A549 (cell line): ENCODE measurements at regions of chr17 and their contacts with region 1.

Region 1: DNA sequence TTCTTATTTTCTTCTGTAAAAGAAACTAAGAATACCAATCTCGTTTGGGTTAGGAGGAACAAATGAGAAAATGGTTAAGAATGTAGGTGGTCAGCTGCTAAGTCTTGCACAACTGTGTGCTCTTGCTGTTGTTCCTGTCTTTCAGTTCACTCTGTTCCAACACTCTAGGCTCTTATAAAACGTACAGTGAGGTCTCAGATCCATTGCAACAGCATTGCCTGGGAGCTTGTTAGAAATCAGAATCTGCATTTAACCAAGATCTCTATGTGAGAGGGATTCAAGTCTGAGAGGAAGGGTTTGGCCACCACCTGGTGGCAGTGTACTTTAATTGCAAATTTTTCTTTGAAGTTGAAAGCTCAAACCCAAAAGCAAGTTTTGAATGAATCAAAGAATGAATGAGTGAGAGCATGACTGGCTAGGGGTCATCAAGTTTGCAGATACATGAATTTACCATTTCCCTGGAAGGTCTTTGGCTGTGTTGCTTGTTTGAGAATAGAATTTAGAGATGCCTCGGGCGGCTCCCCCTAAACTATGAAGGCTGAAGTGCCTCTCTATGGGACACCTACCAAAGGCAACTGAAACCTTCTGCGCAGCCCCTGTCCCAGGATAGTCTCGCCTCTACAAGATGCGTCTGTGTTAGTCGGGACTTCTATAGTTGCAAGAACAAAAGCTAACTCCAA is 2.5 kb downstream of the ALOX15B start:
- DNase-seq: peak; percentile 81
- ATAC-seq: peak; percentile 67 to 76; a peak in 5 of 6 replicates
- H3K4me3 ChIP-seq: no peak overlapping the region
- H3K27ac ChIP-seq: peak overlapping the region in 1 of 2 experiments; percentile 3; a peak in 1 of 6 replicates
- H3K4me1 ChIP-seq: no peaks in the 10 kb centered on the region
- CTCF ChIP-seq: peak; percentile 96
- EP300 ChIP-seq: no peak
- POLR2A ChIP-seq: no peak
- RAD21 ChIP-seq: peak; percentile 94 to 96

Region 2: GRCh38 chr17:7825206-7825990 is 216.0 kb before region 1 on chr17:
- CTCF ChIA-PET with region 1: interaction called, 49 read pairs
- POLR2A ChIA-PET with region 1: no interaction called
- DNase-seq: peak; percentile 47 to 67
- ATAC-seq: peak; percentile 70 to 78
- H3K4me3 ChIP-seq: no peak overlapping the region
- H3K27ac ChIP-seq: no peak overlapping the region
- H3K4me1 ChIP-seq: no peaks in the 10 kb centered on the region; the same call in 2 of the 3 replicates
- CTCF ChIP-seq: no peak
- EP300 ChIP-seq: no peak
- POLR2A ChIP-seq: no peak
- RAD21 ChIP-seq: no peak

Region 3: GRCh38 chr17:7867881-7868329 is 173.5 kb before region 1 on chr17:
- CTCF ChIA-PET with region 1: interaction called, 117 read pairs
- POLR2A ChIA-PET with region 1: no interaction called
- DNase-seq: no peak
- ATAC-seq: no peak
- H3K4me3 ChIP-seq: no peak overlapping the region
- H3K27ac ChIP-seq: no peak overlapping the region
- H3K4me1 ChIP-seq: peaks cover 5% of the 10 kb centered on the region; the same call in 1 of the 3 replicates
- CTCF ChIP-seq: no peak
- EP300 ChIP-seq: no peak
- POLR2A ChIP-seq: no peak
- RAD21 ChIP-seq: no peak

Region 4: GRCh38 chr17:7931709-7932482 is 109.5 kb before region 1 on chr17 and contains the starts of genes CNTROB and TRAPPC1:
- CTCF ChIA-PET with region 1: interaction called, 26 read pairs
- POLR2A ChIA-PET with region 1: interaction called, 4 read pairs
- DNase-seq: peak; percentile 99 to 100
- ATAC-seq: peak; percentile 86 to 94
- H3K4me3 ChIP-seq: peak within 1 kb of the TSS; percentile 69
- H3K27ac ChIP-seq: peak within 1 kb of the TSS; percentile 86 to 89
- H3K4me1 ChIP-seq: peaks cover 21% of the 10 kb centered on the region
- CTCF ChIP-seq: no peak
- EP300 ChIP-seq: no peak
- POLR2A ChIP-seq: peak; percentile 72
- RAD21 ChIP-seq: no peak
- polyA plus RNA-seq, gene CNTROB: 23.2 and 28.3 TPM in 2 replicates
- polyA plus RNA-seq, gene TRAPPC1: 200 and 204 TPM in 2 replicates

Region 5: DNA sequence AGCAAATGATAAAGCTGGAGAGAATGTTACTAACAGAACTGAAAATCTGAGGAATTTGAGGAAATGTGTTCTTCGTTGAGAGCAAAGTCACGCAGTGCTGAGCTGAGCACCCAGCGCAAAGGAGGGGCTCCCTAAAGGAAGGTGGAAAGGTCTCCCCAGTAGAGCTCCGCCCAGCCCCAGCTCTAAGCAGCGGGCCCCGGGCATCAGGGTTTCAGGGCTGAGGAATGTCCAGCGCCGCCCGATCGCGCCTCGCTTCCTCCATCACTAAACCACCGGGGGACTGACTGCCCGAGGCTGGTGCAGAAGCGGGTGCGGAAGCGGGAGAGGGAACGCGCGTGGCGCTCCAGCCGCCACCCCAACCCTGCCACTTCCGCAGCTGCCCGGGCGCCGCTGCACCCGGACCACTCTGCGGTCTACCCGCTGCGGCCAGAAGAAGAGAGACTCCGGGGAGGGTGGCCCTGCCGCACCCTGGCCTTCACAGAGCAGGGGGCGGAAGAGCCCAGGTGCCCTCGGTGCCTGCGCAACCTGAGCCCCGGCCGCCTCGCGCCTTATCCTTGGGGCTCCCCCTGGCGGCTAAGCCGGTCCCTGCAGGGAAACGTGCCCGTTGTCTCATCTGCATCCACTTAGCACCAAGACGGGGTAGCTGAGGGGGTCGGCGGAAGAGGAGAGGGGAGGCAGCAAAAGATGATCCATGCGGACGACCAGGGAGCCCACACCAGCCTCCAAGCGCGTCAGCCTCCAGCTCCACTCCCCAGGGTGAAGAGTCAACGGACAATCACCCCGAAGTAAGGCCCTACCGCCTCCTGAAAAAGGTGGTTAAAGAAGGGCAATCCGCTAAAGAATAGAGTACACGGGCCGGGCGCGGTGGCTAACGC is 51.4 kb before region 1 on chr17:
- CTCF ChIA-PET with region 1: interaction called, 54 read pairs
- POLR2A ChIA-PET with region 1: no interaction called
- DNase-seq: peak; percentile 88 to 97
- ATAC-seq: peak; percentile 90 to 93
- H3K4me3 ChIP-seq: peak overlapping the region; percentile 58
- H3K27ac ChIP-seq: peak overlapping the region; percentile 83 to 93
- H3K4me1 ChIP-seq: no peaks in the 10 kb centered on the region
- CTCF ChIP-seq: peak; percentile 97
- EP300 ChIP-seq: no peak
- POLR2A ChIP-seq: peak; percentile 76
- RAD21 ChIP-seq: peak; percentile 70 to 76

Region 6: DNA sequence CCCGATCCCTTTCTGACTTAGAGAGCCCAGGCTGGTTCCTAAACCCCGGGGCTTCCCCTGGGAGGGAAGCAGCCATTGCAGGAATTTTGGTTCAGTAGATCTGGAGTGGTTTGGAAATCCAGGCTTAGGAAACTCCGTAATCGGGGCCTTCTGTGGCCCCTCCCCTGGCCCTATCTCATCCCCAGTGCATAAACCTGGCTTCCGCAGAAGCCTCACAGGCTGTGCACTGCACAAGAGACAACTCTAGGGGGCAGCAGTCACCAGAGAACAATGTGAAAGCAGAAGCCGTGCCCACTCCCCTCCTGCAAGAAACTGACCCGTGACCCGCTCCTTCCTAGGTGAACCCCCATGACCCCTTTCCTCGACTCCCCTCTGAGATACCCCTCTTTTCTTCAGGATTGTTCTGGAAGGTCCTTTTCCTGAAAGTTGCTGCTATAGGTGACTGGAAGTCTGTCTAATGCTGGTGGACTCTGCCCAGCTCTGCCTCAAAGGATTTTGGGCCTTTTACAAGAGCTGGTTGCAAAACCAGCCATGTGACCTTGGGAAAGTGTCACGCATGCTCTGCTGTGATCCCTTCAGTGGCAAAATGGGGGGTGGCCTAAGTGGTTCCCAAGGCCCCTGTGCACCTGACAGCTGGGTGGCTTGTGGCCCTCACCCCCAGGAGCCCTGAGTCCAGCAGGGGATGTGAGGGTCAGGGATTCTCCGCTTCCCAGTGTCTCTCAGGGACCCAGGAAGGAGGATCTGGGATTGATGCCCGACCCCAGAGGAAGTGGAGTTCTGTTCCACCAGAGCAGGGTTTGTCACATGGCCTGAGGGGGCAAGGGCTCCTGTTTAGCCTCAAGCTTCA is 24.5 kb before region 1 on chr17:
- CTCF ChIA-PET with region 1: interaction called, 143 read pairs
- POLR2A ChIA-PET with region 1: no interaction called
- DNase-seq: peak; percentile 62 to 66
- ATAC-seq: peak; percentile 76 to 92
- H3K4me3 ChIP-seq: peak overlapping the region; percentile 47
- H3K27ac ChIP-seq: peak overlapping the region; percentile 62 to 70; a peak in 5 of 6 replicates
- H3K4me1 ChIP-seq: peaks cover 5% of the 10 kb centered on the region; the same call in 1 of the 3 replicates
- CTCF ChIP-seq: peak; percentile 89
- EP300 ChIP-seq: no peak
- POLR2A ChIP-seq: no peak
- RAD21 ChIP-seq: peak; percentile 72 to 77

Region 7: GRCh38 chr17:8073627-8074484 is 32.5 kb after region 1 on chr17:
- CTCF ChIA-PET with region 1: interaction called, 22 read pairs
- POLR2A ChIA-PET with region 1: no interaction called
- DNase-seq: peak; percentile 84 to 91
- ATAC-seq: peak; percentile 75 to 92
- H3K4me3 ChIP-seq: peak overlapping the region; percentile 34
- H3K27ac ChIP-seq: peak overlapping the region in 1 of 2 experiments; percentile 27; a peak in 2 of 6 replicates
- H3K4me1 ChIP-seq: peaks cover 15% of the 10 kb centered on the region
- CTCF ChIP-seq: peak; percentile 97
- EP300 ChIP-seq: no peak
- POLR2A ChIP-seq: no peak
- RAD21 ChIP-seq: peak; percentile 35 to 42; a peak in 2 of 5 replicates

Region 8: GRCh38 chr17:8438441-8438840 is 397.1 kb after region 1 on chr17:
- CTCF ChIA-PET with region 1: no interaction called
- POLR2A ChIA-PET with region 1: no interaction called
- DNase-seq: no peak
- ATAC-seq: no peak
- H3K4me3 ChIP-seq: no peak overlapping the region
- H3K27ac ChIP-seq: no peak overlapping the region
- H3K4me1 ChIP-seq: peaks cover 10% of the 10 kb centered on the region; the same call in 2 of the 3 replicates
- CTCF ChIP-seq: no peak
- EP300 ChIP-seq: no peak
- POLR2A ChIP-seq: no peak
- RAD21 ChIP-seq: no peak